Head of caudate nucleus (tissue), 42 donors: ENCODE measurements at regions of chr3 and their contacts with region 1.

Region 1: DNA sequence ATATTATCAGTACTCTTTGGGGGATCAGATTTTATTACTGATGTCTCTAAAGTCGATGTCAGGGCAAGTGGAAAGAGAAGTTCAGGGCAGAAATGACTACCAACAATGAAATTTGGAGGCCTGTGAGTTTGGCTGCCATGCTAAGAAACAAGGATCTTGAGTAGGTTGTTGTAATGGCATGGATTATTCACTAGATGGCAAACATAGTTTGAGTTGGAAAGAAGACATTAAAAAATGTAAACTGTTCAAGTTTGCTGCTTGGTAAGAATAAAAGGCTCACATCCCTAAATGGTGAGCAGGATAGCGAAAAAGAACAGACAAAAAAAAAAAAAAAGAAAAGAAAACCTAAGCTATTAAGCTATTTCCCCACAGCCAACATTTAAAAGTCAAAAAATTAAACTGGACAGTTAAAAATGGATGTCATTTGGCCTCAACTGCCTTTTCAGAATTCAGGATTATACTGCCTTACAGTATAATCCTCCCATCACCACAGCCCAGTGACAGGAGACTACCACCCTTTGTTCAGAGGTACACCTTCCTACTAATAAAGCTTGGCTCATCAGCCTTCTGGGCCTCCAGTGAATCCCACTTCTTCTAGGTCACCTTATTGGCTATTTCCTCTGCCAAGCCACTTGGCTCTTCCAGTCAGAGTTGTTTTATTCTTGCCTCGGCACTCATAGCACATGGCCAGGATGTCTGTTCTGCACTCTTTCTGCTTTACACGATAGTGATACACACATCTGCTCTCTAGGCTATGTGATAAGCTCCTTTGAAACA is 163.7 kb downstream of the PLD1 start:
- DNase-seq: peak in 1 of 42 donors; percentile 24

Region 2: DNA sequence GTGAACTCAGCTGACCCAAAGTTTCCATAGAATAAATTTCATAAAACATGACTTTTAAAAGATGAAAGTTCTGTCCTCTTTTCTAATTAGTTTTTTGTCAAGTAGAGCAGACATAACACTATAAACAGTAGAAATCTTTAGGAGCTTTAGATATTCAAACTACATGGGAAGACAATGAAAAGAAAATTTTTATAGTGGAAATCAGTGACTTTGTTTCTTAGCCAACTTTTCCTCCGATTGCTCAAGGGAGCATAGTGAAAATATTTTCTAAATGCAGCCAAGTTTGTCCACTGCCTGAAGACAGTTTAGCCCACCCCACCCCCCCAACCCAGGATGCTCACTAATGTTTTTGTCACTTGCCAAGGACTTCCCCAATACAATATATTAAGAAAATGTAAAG is 48.9 kb after region 1 on chr3:
- intact Hi-C with region 1: no loop called
- DNase-seq: no peak

Region 3: DNA sequence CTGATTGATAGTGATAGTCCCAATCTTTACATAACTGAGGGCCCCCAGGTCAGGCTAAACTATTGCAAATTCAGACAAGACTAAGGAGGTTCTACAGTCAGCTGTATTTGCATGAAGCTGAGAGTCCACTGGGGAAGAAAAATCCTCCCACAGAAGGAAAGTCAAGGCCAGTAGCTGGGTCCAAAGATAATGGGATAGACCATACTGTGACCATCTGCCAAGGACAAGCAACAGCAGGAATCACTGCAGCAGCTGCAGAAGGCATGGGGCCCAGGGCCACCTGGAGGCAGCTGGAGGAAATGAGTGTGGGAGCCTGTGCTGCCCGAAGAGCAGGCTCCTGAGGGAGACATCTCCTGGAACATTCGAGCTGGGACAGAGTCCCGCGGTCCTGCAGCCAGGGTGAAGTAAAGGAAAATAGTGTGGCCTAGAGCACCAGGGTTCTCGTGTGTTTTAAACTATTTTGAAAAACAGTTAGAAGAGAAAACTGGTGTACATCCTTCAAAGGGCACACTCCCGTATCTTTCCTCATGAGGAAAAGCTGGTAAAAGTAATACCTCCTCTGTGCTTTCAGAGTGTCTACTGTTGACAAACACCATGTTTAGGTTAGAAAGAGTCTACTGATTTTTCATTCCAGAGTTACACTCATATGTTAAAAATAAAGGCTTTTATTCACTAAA is 183.4 kb after region 1 on chr3:
- intact Hi-C with region 1: loop called (anchors 5 kb)
- DNase-seq: peak in 41 of 42 donors; percentile 45 to 90 (median 70)